HAP-1 (cell line): ENCODE measurements at regions of chrX and their contacts with region 1.

Region 1: GRCh38 chrX:70769659-70770232 is 138.8 kb downstream of the TEX11 start:
- DNase-seq: peak in 1 of 2 experiments; percentile 33
- H3K4me3 ChIP-seq: no peak overlapping the region
- H3K4me1 ChIP-seq: no peaks in the 10 kb centered on the region; the same call in 1 of the 2 replicates
- H3K27me3 ChIP-seq: no peaks in the 10 kb centered on the region

Region 2: GRCh38 chrX:70901465-70901864 is 131.7 kb after region 1 on chrX:
- in situ Hi-C with region 1: no loop called
- DNase-seq: no peak
- H3K4me3 ChIP-seq: no peak overlapping the region
- H3K4me1 ChIP-seq: no peaks in the 10 kb centered on the region
- H3K27me3 ChIP-seq: no peaks in the 10 kb centered on the region

Region 3: DNA sequence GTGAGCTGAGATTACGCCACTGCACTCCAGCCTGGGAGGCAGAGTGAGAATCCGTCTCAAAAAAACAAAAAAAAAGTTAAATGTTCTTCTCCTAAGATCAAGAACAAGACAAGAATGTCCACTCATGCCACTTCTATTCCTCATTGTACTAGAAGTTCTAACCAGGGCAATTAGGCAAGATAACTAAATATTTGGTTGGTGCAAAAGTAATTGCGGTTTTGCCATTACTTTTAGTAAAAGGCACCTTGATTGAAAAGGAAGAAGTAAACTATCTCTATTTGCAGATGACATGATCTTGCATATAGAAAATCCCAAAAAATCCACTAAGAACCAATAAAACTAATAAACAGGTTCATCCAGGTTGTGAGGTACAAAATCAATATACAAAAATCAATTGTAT is 185.1 kb after region 1 on chrX:
- in situ Hi-C with region 1: loop called (anchors 10 kb)
- DNase-seq: no peak
- H3K4me3 ChIP-seq: no peak overlapping the region
- H3K4me1 ChIP-seq: peaks cover 9% of the 10 kb centered on the region
- H3K27me3 ChIP-seq: no peaks in the 10 kb centered on the region

Region 4: DNA sequence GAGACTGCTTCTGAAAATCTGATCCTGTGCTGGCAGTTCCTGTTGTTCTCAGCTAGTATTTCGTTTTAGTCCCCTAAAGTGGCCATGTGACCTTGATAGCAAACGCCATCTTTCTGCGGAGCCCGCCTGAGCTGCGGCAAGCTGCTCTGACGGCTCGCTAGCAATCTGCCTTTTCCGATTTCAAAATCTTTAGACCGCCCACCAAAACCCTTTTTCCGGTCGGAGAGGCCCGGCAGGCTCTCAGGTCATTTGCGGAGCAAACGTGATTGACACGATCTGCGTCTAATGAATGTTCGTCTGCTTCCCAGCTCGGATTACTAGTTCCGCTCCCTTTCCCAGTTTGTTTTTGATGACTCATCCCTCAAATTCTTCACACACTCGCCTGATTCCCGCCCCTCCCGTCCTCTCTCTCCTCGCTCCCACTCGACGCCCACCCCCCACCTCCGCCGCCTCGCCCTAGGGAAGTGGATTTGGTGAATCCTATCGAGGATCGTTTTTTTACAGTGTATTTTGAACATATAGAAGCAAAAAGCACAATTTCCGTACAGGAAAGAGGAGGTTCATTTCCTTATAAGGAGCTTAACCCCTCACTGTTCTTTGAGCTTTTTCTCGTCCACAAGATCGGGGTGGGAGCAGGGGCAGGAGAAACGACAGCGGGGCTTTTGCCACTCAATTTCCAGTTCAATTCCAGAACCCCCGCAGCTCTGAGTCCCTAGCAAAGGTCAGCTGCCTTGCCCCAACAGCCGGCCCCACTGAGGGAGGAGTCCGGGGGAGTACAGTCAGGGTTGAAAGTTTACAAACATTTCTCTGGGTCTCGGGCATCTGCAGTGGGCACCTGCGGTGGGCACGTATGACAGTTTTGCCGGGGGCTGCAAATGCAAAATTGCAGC is 412.4 kb after region 1 on chrX:
- in situ Hi-C with region 1: loop called (anchors 10 kb)
- DNase-seq: peak; percentile 96 to 99
- H3K4me3 ChIP-seq: peak overlapping the region; percentile 32
- H3K4me1 ChIP-seq: peaks cover 31% of the 10 kb centered on the region
- H3K27me3 ChIP-seq: no peaks in the 10 kb centered on the region